ENCODE measurements at regions of chr6 and their contacts with region 1.

Region 1: GRCh38 chr6:24891004-24891403 is 44.8 kb downstream of the RIPOR2 start:
- DNase-seq: no peak
- ATAC-seq: peak; percentile 28
- H3K4me3 ChIP-seq: no peak overlapping the region
- H3K4me3 Mint-ChIP-seq: peak overlapping the region; percentile 58
- H3K27ac ChIP-seq: peak overlapping the region in 1 of 2 donors; percentile 53
- H3K27ac Mint-ChIP-seq: peak overlapping the region; percentile 54
- H3K4me1 ChIP-seq: peaks cover 82 to 83% of the 10 kb centered on the region in 2 donors
- H3K4me1 Mint-ChIP-seq: peaks cover 88% of the 10 kb centered on the region
- H3K27me3 ChIP-seq: no peaks in the 10 kb centered on the region
- H3K27me3 Mint-ChIP-seq: no peaks in the 10 kb centered on the region
- CTCF ChIP-seq: no peak

Region 2: GRCh38 chr6:24924580-24925356 is 33.8 kb after region 1 on chr6:
- CTCF ChIA-PET with region 1: interaction called, 4 read pairs
- POLR2A ChIA-PET with region 1: no interaction called
- intact Hi-C with region 1: loop called (anchors 5 kb)
- DNase-seq: no peak
- ATAC-seq: no peak
- H3K4me3 ChIP-seq: peak overlapping the region in 2 of 5 experiments; percentile 22 to 27
- H3K4me3 Mint-ChIP-seq: peak overlapping the region; percentile 73
- H3K27ac ChIP-seq: peak overlapping the region in 1 of 2 donors; percentile 93
- H3K27ac Mint-ChIP-seq: peak overlapping the region; percentile 86
- H3K4me1 ChIP-seq: peaks cover 90 to 94% of the 10 kb centered on the region in 2 donors
- H3K4me1 Mint-ChIP-seq: peaks cover 87% of the 10 kb centered on the region
- H3K27me3 ChIP-seq: no peaks in the 10 kb centered on the region
- H3K27me3 Mint-ChIP-seq: no peaks in the 10 kb centered on the region
- CTCF ChIP-seq: no peak

Region 3: GRCh38 chr6:26149240-26149639 is 1258.2 kb after region 1 on chr6:
- CTCF ChIA-PET with region 1: no interaction called
- POLR2A ChIA-PET with region 1: interaction called, 12 read pairs
- intact Hi-C with region 1: no loop called
- DNase-seq: no peak
- ATAC-seq: no peak
- H3K4me3 ChIP-seq: no peak overlapping the region
- H3K4me3 Mint-ChIP-seq: no peak overlapping the region
- H3K27ac ChIP-seq: no peak overlapping the region
- H3K27ac Mint-ChIP-seq: no peak overlapping the region
- H3K4me1 ChIP-seq: no peaks in the 10 kb centered on the region
- H3K4me1 Mint-ChIP-seq: no peaks in the 10 kb centered on the region
- H3K27me3 ChIP-seq: no peaks in the 10 kb centered on the region
- H3K27me3 Mint-ChIP-seq: no peaks in the 10 kb centered on the region
- CTCF ChIP-seq: no peak